Naive thymus-derived CD8-positive, alpha-beta T cell (primary cell): ENCODE measurements at regions of chr12 and their contacts with region 1.

Region 1: DNA sequence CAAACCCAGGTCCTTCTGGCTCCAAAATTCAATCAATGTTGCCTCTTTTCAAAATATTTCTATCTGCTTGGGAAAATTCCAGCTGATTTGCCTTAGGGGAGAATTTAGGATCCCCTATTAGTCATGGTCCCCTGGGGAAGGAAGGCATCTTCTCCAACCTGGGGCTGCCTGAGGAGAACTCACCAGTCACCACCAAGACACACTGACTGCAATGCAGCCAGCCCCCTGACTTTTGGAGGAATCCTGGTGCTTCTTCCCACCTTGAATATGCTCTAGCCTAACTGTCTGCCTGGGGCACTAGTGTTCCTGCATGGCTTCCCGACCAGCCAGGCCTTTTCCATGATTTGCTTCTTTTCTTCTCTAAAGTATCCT is 71.8 kb upstream of the BCL2L14 start:
- DNase-seq: no peak
- ATAC-seq: peak in 1 of 2 donors; percentile 14
- H3K4me3 Mint-ChIP-seq: peak overlapping the region in 9 of 10 donors; percentile 6 to 71 (median 60)
- H3K27ac Mint-ChIP-seq: peak overlapping the region; percentile 79 to 94 (median 87)
- H3K4me1 Mint-ChIP-seq: peaks cover 9 to 31% (median 29%) of the 10 kb centered on the region in 4 donors
- H3K27me3 Mint-ChIP-seq: no peaks in the 10 kb centered on the region

Region 2: DNA sequence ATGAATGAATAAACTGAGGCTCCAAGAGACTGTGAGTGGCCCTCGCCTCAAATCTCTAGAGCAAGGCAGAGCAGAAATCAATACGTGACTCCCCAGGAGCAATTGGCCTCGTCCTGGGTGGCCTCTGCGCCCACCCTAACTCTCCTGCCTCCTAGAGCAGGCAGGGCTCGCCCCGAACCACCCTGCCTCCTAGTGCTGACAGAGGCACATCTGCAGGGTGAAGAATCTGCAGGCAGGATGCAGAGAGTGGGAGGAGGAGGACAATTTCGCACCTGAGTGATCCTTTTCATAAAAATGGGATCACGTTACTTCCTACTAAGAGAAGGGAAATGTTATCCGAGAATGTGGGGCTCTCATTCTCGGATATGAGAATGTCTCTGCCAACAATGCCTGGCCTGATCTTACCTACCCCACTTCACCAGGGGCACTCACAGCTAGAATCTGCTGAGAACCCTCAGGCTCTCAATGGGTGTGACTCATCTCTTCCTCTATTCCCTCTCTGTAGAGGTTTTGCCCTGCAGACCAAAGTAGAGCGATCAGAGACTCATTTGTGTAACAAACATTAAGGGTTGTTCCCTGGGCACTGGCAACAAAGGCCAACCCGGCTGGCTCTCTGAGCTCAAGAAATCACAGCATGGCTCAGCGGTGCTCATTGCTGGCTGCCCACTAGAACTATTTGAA is 10.1 kb after region 1 on chr12:
- POLR2A ChIA-PET with region 1: interaction called, 31 read pairs
- DNase-seq: peak in 6 of 10 donors; percentile 4 to 67 (median 27)
- ATAC-seq: peak; percentile 53 to 83
- H3K4me3 Mint-ChIP-seq: peak overlapping the region in 9 of 10 donors; percentile 43 to 92 (median 84)
- H3K27ac Mint-ChIP-seq: peak overlapping the region; percentile 25 to 95 (median 85)
- H3K4me1 Mint-ChIP-seq: peaks cover 41 to 64% (median 62%) of the 10 kb centered on the region in 4 donors
- H3K27me3 Mint-ChIP-seq: peaks cover 0 to 2% (median 0%) of the 10 kb centered on the region in 5 donors

Region 3: DNA sequence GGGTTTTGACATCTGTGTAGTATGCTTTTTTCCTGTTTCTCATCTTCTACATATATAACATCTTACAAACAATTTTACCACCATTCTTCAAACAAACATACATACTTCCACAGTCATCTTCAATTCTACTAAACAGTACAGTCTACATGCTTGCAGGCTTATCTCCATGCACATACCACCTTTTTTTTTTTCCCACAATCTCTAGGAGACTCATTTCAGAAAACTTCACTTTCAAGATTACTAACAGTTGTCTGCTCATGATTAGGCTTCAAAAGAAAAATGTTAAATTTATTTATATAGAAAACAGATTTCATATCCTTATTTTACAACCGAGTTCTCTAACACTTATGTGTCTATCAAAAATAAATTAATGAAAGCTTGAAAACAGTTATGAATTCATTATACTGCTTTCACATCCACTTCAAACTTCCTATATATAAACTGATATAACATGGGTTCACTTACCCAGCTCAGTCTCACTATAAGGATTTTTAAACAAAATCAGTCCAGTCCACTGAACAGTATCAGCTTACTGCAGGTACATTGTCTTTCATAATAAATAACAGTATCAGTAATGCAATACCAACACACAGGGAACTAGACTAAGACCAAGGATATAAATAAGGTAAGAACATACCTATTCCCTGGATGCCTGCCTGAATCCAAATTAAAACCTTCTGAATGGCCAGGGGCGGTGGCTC is 225.5 kb after region 1 on chr12:
- POLR2A ChIA-PET with region 1: no interaction called
- DNase-seq: no peak
- ATAC-seq: no peak
- H3K4me3 Mint-ChIP-seq: no peak overlapping the region
- H3K27ac Mint-ChIP-seq: no peak overlapping the region
- H3K4me1 Mint-ChIP-seq: peaks cover 0 to 13% (median 11%) of the 10 kb centered on the region in 4 donors
- H3K27me3 Mint-ChIP-seq: peaks cover 0 to 8% (median 2%) of the 10 kb centered on the region in 5 donors